ENCODE measurements at regions of chr16 and their contacts with region 1.

Region 1: GRCh38 chr16:4660454-4661007 is 32.8 kb upstream of the NUDT16L1 start:
- DNase-seq: no peak
- H3K4me3 ChIP-seq: no peak overlapping the region
- H3K27me3 ChIP-seq: no peaks in the 10 kb centered on the region
- CTCF ChIP-seq: no peak

Region 2: DNA sequence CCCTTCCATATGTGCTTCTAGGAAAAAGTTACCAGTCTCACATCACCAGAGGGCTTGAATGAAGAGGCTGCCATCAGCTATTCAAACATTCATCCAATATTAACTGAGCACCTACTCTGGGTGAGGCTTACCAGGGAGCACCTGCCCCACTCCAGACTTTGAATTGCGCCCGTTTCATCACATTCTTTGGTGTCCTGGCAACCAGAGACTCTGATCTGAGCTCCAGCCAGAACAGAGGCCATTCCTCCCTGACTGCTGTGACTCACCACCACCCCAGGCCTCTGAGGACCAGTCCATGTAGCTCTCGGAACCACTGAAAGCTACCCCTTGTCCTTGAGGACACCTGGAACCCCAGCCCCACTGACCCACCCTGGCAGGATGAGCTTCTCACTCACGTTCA is 104.4 kb before region 1 on chr16 and contains the start of gene C16orf96:
- CTCF ChIA-PET with region 1: no interaction called
- POLR2A ChIA-PET with region 1: no interaction called
- DNase-seq: no peak
- H3K4me3 ChIP-seq: no peak within 1 kb of the TSS
- H3K27me3 ChIP-seq: peaks cover 10% of the 10 kb centered on the region
- CTCF ChIP-seq: no peak
- polyA plus RNA-seq, gene C16orf96: not detected in 2 replicates

Region 3: DNA sequence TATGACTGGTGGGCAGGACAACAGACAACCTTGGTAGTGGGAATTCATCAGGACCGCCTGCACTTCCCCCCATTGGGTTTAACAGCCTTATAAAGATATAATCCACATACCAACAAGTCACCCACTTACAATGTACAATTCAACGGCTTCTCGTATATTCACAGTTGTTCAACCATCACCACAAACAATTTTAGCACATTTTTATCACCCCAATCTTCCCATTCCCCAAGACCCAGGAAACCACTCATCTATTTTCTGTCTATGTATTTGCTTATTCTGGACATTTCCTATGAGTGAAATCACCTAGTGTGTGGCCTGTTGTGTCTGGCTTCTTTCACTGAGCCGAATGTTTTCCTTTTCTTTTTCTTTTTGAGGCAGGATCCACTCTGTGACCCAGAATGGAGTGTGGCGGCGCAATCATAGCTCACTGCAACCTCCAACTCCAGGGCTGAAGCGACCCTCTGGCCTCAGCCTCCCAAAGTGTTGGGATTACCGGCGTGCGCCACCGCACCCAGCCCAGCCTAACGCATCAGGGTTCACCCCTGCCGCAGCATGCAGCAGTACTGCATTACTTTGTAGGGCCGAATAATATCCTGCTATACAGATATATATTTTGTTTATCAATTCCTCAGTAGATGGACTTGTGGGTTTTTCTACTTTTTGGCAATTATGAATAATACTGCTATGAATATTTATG is 62.7 kb after region 1 on chr16:
- CTCF ChIA-PET with region 1: no interaction called
- POLR2A ChIA-PET with region 1: interaction called, 16 read pairs
- DNase-seq: no peak
- H3K4me3 ChIP-seq: no peak overlapping the region
- H3K27me3 ChIP-seq: no peaks in the 10 kb centered on the region
- CTCF ChIP-seq: no peak